PC-9 (cell line): ENCODE measurements at regions of chr6 and their contacts with region 1.

Region 1: DNA sequence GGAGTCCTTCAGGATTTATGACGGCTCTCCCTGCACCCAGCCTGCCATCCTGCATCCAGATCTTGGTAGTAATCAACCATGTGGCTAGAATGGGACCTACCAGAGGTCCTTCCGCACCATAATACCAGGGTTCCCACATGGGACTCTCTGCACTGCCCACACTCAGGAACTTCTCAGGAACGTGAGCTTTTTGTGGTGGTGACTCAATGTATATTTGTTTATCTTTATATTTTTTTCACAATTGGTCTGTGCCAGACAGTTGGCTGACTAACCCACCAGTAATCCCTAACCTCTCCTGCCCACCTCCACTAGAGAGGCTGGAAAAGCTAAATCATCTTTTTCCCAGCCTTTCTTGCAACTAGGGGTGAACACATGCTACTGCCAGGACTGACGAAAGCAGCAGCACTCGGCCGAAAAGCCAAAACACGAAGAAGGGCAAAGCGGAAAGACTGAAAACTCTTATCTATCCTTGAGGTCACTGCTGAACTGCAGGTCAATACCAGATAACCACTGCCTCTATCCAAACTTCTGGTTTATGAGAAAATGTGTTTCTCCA is 113.0 kb downstream of the TRERF1 start:
- DNase-seq: peak; percentile 70 to 97
- H3K4me3 ChIP-seq: peak overlapping the region; percentile 15; the same call in 1 of the 2 replicates
- H3K27ac ChIP-seq: peak overlapping the region; percentile 93
- H3K4me1 ChIP-seq: peaks cover 39% of the 10 kb centered on the region
- H3K27me3 ChIP-seq: no peaks in the 10 kb centered on the region
- CTCF ChIP-seq: no peak

Region 2: GRCh38 chr6:42547407-42548329 is 208.9 kb after region 1 on chr6:
- CTCF ChIA-PET with region 1: interaction called, 10 read pairs
- POLR2A ChIA-PET with region 1: no interaction called
- intact Hi-C with region 1: no loop called
- DNase-seq: peak in 1 of 2 experiments; percentile 83
- H3K4me3 ChIP-seq: peak overlapping the region; percentile 51; the same call in 1 of the 2 replicates
- H3K27ac ChIP-seq: no peak overlapping the region
- H3K4me1 ChIP-seq: no peaks in the 10 kb centered on the region
- H3K27me3 ChIP-seq: no peaks in the 10 kb centered on the region
- CTCF ChIP-seq: peak; percentile 96

Region 3: DNA sequence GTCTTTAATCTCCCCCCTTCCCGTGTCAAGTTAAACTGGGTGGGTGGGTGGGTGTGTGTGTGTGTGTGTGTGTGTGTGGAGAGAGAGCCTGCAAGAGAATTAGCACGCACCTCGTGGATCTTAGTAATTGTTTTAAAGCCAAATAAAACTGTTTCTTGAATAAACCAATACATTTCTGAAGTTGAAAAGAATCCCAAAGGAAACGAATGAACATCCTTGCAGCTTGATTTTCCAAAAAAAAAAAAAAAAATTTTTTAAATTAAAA is 442.7 kb after region 1 on chr6:
- CTCF ChIA-PET with region 1: no interaction called
- POLR2A ChIA-PET with region 1: no interaction called
- intact Hi-C with region 1: no loop called
- DNase-seq: no peak
- H3K4me3 ChIP-seq: peak overlapping the region; percentile 49
- H3K27ac ChIP-seq: peak overlapping the region; percentile 94
- H3K4me1 ChIP-seq: peaks cover 39% of the 10 kb centered on the region
- H3K27me3 ChIP-seq: no peaks in the 10 kb centered on the region
- CTCF ChIP-seq: no peak

Region 4: DNA sequence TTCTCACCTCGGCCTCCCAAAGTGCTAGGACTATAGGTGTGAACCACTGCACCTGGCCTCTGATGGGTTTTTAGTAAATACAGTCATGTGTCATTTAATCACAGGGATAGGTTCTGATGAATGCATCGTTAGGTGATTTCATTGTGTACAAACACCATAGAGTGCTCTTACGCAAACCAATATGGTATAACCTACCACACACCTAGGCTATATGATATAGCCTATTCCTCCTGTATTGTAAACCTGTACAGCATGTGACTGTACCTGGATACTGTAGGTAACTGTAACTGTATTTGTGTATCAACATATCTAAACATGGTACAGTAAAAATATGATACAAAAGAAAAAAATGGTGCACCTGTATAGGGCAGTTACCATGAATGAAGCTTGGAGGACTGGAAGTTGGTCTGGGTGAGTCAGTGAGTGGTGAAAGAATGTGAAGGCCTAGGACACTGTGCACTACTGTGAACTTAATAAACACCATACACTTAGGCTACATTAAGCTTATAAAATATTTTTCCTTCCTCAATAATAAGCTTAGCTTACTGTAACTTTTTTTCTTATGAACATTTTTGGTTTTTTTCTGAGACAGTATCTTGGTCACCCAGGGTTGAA is 453.1 kb after region 1 on chr6:
- CTCF ChIA-PET with region 1: no interaction called
- POLR2A ChIA-PET with region 1: no interaction called
- intact Hi-C with region 1: no loop called
- DNase-seq: no peak
- H3K4me3 ChIP-seq: no peak overlapping the region
- H3K27ac ChIP-seq: no peak overlapping the region
- H3K4me1 ChIP-seq: no peaks in the 10 kb centered on the region
- H3K27me3 ChIP-seq: no peaks in the 10 kb centered on the region
- CTCF ChIP-seq: no peak